Activated B cell treated with CpG ODN at 0.5 μM for 24 hours (primary cell): ENCODE measurements at regions of chr5 and their contacts with region 1.

Region 1: GRCh38 chr5:158511454-158511853 is 588.3 kb downstream of the EBF1 start:
- DNase-seq: peak; percentile 19
- ATAC-seq: peak; percentile 97
- H3K4me3 Mint-ChIP-seq: peak overlapping the region; percentile 2
- H3K27ac Mint-ChIP-seq: peak overlapping the region; percentile 47
- H3K4me1 Mint-ChIP-seq: peaks cover 53% of the 10 kb centered on the region
- H3K27me3 Mint-ChIP-seq: no peaks in the 10 kb centered on the region
- CTCF ChIP-seq: no peak

Region 2: GRCh38 chr5:158499075-158499891 is 12.2 kb before region 1 on chr5:
- CTCF ChIA-PET with region 1: no interaction called
- POLR2A ChIA-PET with region 1: no interaction called
- intact Hi-C with region 1: loop called (anchors 2 kb)
- DNase-seq: no peak
- ATAC-seq: no peak
- H3K4me3 Mint-ChIP-seq: no peak overlapping the region
- H3K27ac Mint-ChIP-seq: no peak overlapping the region
- H3K4me1 Mint-ChIP-seq: peaks cover 3% of the 10 kb centered on the region
- H3K27me3 Mint-ChIP-seq: no peaks in the 10 kb centered on the region
- CTCF ChIP-seq: no peak

Region 3: DNA sequence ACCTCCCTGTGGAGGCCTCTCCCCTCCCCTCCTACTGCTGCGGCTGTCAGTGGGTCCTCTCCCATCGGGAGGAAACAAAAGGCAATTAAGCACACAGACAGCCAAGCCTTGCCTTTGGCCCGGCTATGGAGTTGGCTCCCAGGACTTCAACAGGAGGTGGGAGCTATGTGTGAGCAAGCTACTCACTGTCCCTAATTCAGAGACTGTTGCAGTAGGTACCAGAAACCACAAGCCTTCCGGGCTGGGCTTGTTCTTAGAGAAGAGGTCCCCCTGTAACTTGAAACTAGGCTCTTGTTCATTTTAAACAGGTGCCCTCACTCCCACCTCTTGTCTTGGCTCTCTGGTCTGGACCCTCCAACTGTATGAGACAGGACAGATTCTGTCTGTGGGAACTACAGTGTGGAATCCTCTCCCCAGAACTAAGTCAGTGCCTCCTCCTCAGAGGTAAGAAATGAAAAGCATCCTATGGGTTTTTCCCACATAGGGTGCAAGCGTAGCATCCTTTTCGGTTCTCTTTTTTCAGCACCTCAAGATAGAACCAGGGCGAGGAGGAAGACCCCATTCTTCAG is 27.1 kb after region 1 on chr5:
- CTCF ChIA-PET with region 1: no interaction called
- POLR2A ChIA-PET with region 1: interaction called, 9 read pairs
- intact Hi-C with region 1: loop called (anchors 2 kb)
- DNase-seq: no peak
- ATAC-seq: peak; percentile 83
- H3K4me3 Mint-ChIP-seq: peak overlapping the region; percentile 67
- H3K27ac Mint-ChIP-seq: peak overlapping the region; percentile 35
- H3K4me1 Mint-ChIP-seq: peaks cover 29% of the 10 kb centered on the region
- H3K27me3 Mint-ChIP-seq: peaks cover 1% of the 10 kb centered on the region
- CTCF ChIP-seq: no peak

Region 4: GRCh38 chr5:158560170-158560569 is 48.7 kb after region 1 on chr5:
- CTCF ChIA-PET with region 1: no interaction called
- POLR2A ChIA-PET with region 1: interaction called, 6 read pairs
- intact Hi-C with region 1: loop called (anchors 2 kb)
- DNase-seq: peak; percentile 48
- ATAC-seq: peak; percentile 92
- H3K4me3 Mint-ChIP-seq: peak overlapping the region; percentile 68
- H3K27ac Mint-ChIP-seq: peak overlapping the region; percentile 61
- H3K4me1 Mint-ChIP-seq: peaks cover 52% of the 10 kb centered on the region
- H3K27me3 Mint-ChIP-seq: no peaks in the 10 kb centered on the region
- CTCF ChIP-seq: no peak

Region 5: DNA sequence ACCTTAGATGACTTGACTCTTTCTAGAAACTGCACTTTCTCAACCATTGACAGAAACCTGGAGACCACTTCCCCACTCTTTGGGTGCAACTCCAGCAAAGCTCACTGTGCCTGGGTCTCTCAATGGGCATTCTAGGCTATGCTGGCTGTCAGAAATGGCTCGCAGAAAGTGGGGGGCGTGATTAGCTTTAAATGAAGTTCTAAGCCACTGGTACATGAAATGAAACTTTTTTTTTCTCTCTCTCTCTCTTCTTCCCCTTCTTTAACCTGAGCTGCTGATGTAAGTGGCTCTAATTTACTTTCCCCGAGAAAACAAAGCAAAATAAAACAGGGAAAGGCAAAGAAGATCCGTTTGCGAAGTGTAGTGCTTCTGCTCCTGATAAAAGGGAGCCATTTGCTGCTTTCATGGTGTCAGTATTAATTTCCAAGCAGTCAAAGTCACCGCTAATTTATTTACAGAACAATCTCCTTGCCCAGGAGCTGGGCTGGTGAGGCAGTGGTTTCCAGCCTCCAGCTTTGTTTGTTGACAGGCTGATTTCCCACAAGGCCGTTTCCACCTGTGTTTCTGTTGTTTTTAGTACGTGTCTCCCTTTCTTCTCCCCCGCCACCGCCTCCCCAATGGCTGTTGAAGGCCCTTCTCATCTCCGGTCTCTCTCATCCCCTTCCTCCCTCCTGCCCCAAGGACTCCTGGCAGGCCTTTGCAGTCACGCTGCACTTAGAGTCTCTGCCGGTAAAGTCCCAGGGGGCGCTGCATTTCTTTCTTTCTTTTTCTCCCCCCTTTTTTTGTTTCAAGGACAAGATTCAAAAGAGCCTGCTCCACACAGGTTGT is 165.4 kb after region 1 on chr5:
- CTCF ChIA-PET with region 1: no interaction called
- POLR2A ChIA-PET with region 1: interaction called, 3 read pairs
- intact Hi-C with region 1: loop called (anchors 2 kb)
- DNase-seq: no peak
- ATAC-seq: peak; percentile 83
- H3K4me3 Mint-ChIP-seq: peak overlapping the region; percentile 74
- H3K27ac Mint-ChIP-seq: peak overlapping the region; percentile 92
- H3K4me1 Mint-ChIP-seq: peaks cover 28% of the 10 kb centered on the region
- H3K27me3 Mint-ChIP-seq: no peaks in the 10 kb centered on the region
- CTCF ChIP-seq: no peak

Region 6: GRCh38 chr5:159094745-159095144 is 583.3 kb after region 1 on chr5:
- CTCF ChIA-PET with region 1: no interaction called
- POLR2A ChIA-PET with region 1: interaction called, 11 read pairs
- intact Hi-C with region 1: no loop called
- DNase-seq: peak; percentile 44
- ATAC-seq: no peak
- H3K4me3 Mint-ChIP-seq: peak overlapping the region; percentile 99
- H3K27ac Mint-ChIP-seq: peak overlapping the region; percentile 67
- H3K4me1 Mint-ChIP-seq: peaks cover 70% of the 10 kb centered on the region
- H3K27me3 Mint-ChIP-seq: no peaks in the 10 kb centered on the region
- CTCF ChIP-seq: no peak